ENCODE measurements at regions of chr3 and their contacts with region 1.

Region 1: GRCh38 chr3:64837126-64837738 is 149.4 kb upstream of the ADAMTS9 start:
- DNase-seq: peak; percentile 78
- H3K4me3 ChIP-seq: no peak overlapping the region
- H3K27ac ChIP-seq: peak overlapping the region; percentile 1 to 20
- H3K4me1 ChIP-seq: no peaks in the 10 kb centered on the region
- H3K27me3 ChIP-seq: no peaks in the 10 kb centered on the region
- CTCF ChIP-seq: no peak
- POLR2A ChIP-seq: no peak

Region 2: GRCh38 chr3:64939747-64940450 is 102.7 kb after region 1 on chr3:
- intact Hi-C with region 1: loop called (anchors 5 kb)
- DNase-seq: peak; percentile 75
- H3K4me3 ChIP-seq: no peak overlapping the region
- H3K27ac ChIP-seq: peak overlapping the region; percentile 53 to 57
- H3K4me1 ChIP-seq: peaks cover 2% of the 10 kb centered on the region
- H3K27me3 ChIP-seq: no peaks in the 10 kb centered on the region
- CTCF ChIP-seq: no peak
- POLR2A ChIP-seq: no peak